HAP-1 (cell line): ENCODE measurements at regions of chr1 and their contacts with region 1.

Region 1: GRCh38 chr1:185317034-185317885 is at the start of gene IVNS1ABP:
- DNase-seq: peak; percentile 88 to 94
- H3K4me3 ChIP-seq: peak within 1 kb of the TSS; percentile 85
- H3K4me1 ChIP-seq: peaks cover 26% of the 10 kb centered on the region
- H3K27me3 ChIP-seq: no peaks in the 10 kb centered on the region

Region 2: DNA sequence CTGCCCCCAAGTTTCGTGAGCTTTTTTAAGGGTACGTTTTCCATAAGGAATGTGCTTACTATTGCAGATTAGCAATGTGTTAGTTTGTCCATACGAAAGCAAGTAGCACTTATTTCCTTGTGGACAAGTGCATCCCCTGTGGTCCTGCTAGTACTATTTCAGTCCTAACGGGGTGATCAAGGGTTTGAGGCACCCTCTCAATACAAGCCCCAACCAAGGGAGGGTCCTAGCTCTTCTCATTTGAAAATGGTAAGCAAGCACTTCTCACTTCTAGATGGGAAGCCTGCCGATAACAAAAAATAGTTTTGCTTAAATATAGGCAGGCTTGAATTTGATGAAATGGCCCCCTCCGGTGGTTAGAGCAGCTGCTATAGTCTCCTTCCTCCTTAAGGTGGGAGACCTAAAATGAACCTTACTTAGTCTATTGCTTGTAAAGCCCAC is 352.9 kb after region 1 on chr1:
- in situ Hi-C with region 1: loop called (anchors 25 kb)
- DNase-seq: peak in 1 of 2 experiments; percentile 57
- H3K4me3 ChIP-seq: no peak overlapping the region
- H3K4me1 ChIP-seq: no peaks in the 10 kb centered on the region
- H3K27me3 ChIP-seq: no peaks in the 10 kb centered on the region

Region 3: DNA sequence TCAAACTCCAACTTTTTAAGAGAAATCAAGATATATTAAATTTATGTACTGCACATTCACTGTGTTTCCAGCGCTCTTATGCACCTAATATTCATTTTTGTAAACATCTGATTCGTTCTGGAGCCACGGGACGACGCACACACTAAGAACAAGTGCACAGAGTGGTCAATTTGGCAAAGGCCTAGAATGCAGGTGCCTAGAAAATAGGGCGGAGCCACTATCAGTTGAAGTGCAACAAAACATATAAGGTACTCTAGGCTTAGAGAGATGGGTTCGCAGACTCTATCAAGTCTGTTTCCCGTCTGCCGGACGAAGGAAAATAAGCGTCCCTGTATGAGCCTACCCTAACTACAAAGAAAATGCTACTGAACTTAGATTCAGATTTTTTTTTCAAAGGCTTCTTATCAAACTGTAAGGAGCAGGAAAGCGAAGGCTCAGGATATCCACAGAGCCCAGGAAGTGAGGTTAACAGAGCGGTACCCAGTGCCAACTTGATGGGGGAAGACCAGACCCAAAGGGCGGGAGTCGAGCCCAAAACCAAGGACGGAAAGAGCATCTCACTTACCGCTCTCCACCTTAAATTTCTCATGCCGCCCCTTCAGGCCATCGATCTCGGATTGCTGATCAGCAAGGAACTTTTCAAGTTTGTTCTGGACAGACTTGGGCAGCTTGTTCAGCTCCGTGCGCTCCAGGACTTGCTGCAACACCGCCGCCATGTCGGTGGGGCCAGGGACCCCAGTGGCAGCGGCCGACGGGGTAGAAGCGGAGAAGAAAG is 1057.2 kb after region 1 on chr1:
- in situ Hi-C with region 1: loop called (anchors 25 kb)
- DNase-seq: peak; percentile 33 to 55
- H3K4me3 ChIP-seq: peak overlapping the region; percentile 82
- H3K4me1 ChIP-seq: peaks cover 25% of the 10 kb centered on the region
- H3K27me3 ChIP-seq: no peaks in the 10 kb centered on the region